ENCODE measurements at regions of chr16 and their contacts with region 1.

Region 1: DNA sequence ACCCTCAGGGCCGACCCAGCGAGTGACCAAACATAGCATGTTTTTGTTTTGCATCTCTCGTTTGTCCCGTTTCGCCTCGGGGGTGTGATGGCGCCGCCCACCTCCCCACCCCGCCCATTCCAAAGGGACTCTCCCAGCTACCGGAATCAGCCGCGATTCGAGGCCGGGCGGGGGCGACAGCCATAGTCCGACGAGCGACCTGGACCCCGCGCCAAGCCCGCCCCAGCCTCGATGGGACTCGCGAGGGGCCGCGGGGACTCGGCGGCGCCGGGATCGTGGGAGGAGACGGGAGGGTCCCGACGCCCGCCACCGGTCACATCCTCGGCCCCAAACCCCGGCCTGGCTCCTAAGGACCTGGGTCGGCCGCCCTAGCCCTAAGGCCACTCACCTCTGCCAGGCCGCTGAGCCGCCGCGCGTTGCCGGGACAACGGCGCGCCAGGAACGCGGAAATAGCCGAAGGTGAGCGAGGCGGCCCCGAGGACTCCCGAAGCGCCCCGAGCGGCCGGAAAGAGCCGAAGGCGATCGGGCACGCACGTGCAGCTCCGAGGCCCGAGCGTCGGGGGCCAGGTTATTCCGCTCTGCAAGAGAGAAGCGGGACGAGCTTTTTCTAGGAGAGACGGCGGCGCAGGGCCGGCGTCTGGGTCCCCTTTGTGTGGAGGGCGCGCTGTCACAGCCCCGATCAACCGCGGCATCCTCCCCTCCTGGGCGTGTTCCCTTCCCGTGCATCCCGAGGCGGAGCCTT is 1.4 kb downstream of the IFT140 start:
- DNase-seq: peak; percentile 86 to 93
- ATAC-seq: peak; percentile 71 to 87 (median 81)
- H3K4me3 ChIP-seq: peak overlapping the region; percentile 48 to 94 (median 78)
- H3K27ac ChIP-seq: peak overlapping the region; percentile 14 to 91 (median 84)
- H3K4me1 ChIP-seq: peaks cover 8 to 43% (median 37%) of the 10 kb centered on the region in 9 donors
- H3K27me3 ChIP-seq: no peaks in the 10 kb centered on the region
- CTCF ChIP-seq: peak in 1 of 9 donors; percentile 13

Region 2: GRCh38 chr16:1420111-1420540 is 190.3 kb before region 1 on chr16:
- intact Hi-C with region 1: loop called in 1 of 10 experiments (anchors 2 kb)
- DNase-seq: no peak
- ATAC-seq: peak in 3 of 8 donors; percentile 0 to 4 (median 1)
- H3K4me3 ChIP-seq: peak overlapping the region; percentile 70 to 92 (median 85)
- H3K27ac ChIP-seq: peak overlapping the region in 9 of 10 donors; percentile 94 to 98 (median 96)
- H3K4me1 ChIP-seq: peaks cover 2 to 29% (median 20%) of the 10 kb centered on the region in 9 donors
- H3K27me3 ChIP-seq: no peaks in the 10 kb centered on the region
- CTCF ChIP-seq: no peak

Region 3: GRCh38 chr16:1533443-1533951 is 77.0 kb before region 1 on chr16 and contains the start of gene TMEM204:
- intact Hi-C with region 1: loop called in 3 of 10 experiments (anchors 5 kb)
- DNase-seq: peak; percentile 85 to 90
- ATAC-seq: peak; percentile 54 to 83 (median 77)
- H3K4me3 ChIP-seq: peak within 1 kb of the TSS; percentile 71 to 94 (median 88)
- H3K27ac ChIP-seq: peak within 1 kb of the TSS; percentile 87 to 99 (median 95)
- H3K4me1 ChIP-seq: peaks cover 32 to 77% (median 75%) of the 10 kb centered on the region in 9 donors
- H3K27me3 ChIP-seq: peaks cover 0 to 30% (median 0%) of the 10 kb centered on the region in 7 donors
- CTCF ChIP-seq: no peak
- total RNA-seq, gene TMEM204: 10.7 to 24.4 (median 18.1) TPM

Region 4: GRCh38 chr16:1556254-1556653 is 54.2 kb before region 1 on chr16:
- intact Hi-C with region 1: loop called in 2 of 10 experiments (anchors 5 kb)
- DNase-seq: no peak
- ATAC-seq: no peak
- H3K4me3 ChIP-seq: no peak overlapping the region
- H3K27ac ChIP-seq: no peak overlapping the region
- H3K4me1 ChIP-seq: peaks cover 2 to 59% (median 19%) of the 10 kb centered on the region in 9 donors
- H3K27me3 ChIP-seq: no peaks in the 10 kb centered on the region
- CTCF ChIP-seq: no peak

Region 5: DNA sequence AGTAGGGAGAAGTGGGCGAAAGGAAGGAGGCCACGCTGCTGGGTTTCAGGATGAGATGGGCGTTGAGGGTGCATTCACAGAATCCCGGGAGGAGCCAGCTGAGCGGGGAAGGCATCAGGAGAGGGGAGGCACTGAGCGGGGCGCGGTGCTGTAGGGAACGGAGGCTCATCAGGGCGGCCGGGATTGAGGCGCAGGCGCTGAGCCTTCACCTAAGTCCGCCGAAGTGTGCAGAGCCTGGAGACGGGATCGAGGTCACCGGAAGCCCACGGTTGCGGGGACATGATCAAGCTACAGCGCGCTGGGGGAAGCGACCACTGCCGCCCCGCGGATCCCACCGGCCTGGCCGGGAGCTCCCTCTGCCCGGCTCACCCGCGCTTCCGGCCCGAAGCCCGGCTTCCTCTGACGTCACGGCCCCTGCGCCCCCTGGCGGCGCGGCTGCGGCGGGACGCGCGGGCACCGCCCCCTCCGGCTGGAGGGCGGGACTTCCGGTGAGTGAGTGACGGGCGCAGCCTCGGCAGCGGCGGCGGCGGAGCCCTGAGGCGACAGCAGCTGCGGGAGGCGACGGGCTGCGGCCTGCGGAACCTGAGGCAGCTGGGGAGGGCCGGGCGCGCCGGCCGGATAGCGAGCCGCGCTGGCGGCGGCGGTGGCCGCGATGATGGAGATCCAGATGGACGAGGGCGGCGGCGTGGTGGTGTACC is 95.4 kb after region 1 on chr16 and contains the start of gene MAPK8IP3:
- intact Hi-C with region 1: loop called in 3 of 10 experiments (anchors 5 to 10 kb)
- DNase-seq: peak; percentile 87 to 95
- ATAC-seq: peak; percentile 89 to 96 (median 93)
- H3K4me3 ChIP-seq: peak within 1 kb of the TSS; percentile 68 to 100 (median 90)
- H3K27ac ChIP-seq: peak within 1 kb of the TSS; percentile 80 to 98 (median 94)
- H3K4me1 ChIP-seq: peaks cover 17 to 49% (median 36%) of the 10 kb centered on the region in 9 donors
- H3K27me3 ChIP-seq: no peaks in the 10 kb centered on the region
- CTCF ChIP-seq: peak; percentile 89 to 99 (median 98)
- total RNA-seq, gene MAPK8IP3: 61.3 to 96.0 (median 71.7) TPM

Measured in heart right ventricle (tissue), 16 donors.